T-cell (primary cell): ENCODE measurements at regions of chr2 and their contacts with region 1.

Region 1: GRCh38 chr2:218659258-218659987 is at the starts of genes BCS1L and ZNF142:
- DNase-seq: peak; percentile 82 to 96 (median 90)
- ATAC-seq: peak; percentile 97 to 99 (median 98)
- H3K4me3 ChIP-seq: peak within 1 kb of the TSS; percentile 89 to 91
- H3K4me3 Mint-ChIP-seq: peak within 1 kb of the TSS; percentile 82 to 96 (median 91)
- H3K27ac ChIP-seq: peak within 1 kb of the TSS; percentile 58
- H3K27ac Mint-ChIP-seq: peak within 1 kb of the TSS; percentile 83 to 88
- H3K4me1 ChIP-seq: peaks cover 2 to 18% of the 10 kb centered on the region in 2 experiments
- H3K4me1 Mint-ChIP-seq: peaks cover 33 to 34% (median 34%) of the 10 kb centered on the region in 3 donors
- H3K27me3 ChIP-seq: no peaks in the 10 kb centered on the region
- H3K27me3 Mint-ChIP-seq: no peaks in the 10 kb centered on the region
- total RNA-seq, gene BCS1L: 31.4 to 71.1 (median 54.2) TPM
- total RNA-seq, gene ZNF142: 38.1 to 65.0 (median 58.7) TPM

Region 2: DNA sequence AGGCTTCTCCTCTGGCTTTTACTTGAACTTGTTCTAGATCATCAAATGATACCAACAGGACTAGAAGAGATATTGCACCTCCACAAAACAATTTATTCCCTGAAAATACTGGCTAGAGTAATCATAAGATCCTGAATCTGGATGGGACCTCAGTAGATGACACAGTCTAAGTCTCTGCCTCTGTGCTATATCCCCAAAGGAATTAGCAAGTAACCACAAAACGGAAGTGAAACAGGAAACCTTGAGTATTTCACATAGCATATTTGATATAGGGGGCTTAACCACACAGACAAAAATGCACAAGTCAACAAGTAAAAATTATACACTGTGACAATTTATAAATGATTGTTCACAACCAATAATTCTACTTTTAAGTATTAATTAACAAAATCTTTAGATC is 1342.7 kb before region 1 on chr2:
- CTCF ChIA-PET with region 1: no interaction called
- POLR2A ChIA-PET with region 1: no interaction called
- DNase-seq: no peak
- ATAC-seq: no peak
- H3K4me3 ChIP-seq: no peak overlapping the region
- H3K4me3 Mint-ChIP-seq: no peak overlapping the region
- H3K27ac ChIP-seq: no peak overlapping the region
- H3K27ac Mint-ChIP-seq: no peak overlapping the region
- H3K4me1 ChIP-seq: peaks cover 0 to 8% of the 10 kb centered on the region in 2 experiments
- H3K4me1 Mint-ChIP-seq: peaks cover 14 to 18% (median 17%) of the 10 kb centered on the region in 3 donors
- H3K27me3 ChIP-seq: no peaks in the 10 kb centered on the region
- H3K27me3 Mint-ChIP-seq: no peaks in the 10 kb centered on the region

Region 3: DNA sequence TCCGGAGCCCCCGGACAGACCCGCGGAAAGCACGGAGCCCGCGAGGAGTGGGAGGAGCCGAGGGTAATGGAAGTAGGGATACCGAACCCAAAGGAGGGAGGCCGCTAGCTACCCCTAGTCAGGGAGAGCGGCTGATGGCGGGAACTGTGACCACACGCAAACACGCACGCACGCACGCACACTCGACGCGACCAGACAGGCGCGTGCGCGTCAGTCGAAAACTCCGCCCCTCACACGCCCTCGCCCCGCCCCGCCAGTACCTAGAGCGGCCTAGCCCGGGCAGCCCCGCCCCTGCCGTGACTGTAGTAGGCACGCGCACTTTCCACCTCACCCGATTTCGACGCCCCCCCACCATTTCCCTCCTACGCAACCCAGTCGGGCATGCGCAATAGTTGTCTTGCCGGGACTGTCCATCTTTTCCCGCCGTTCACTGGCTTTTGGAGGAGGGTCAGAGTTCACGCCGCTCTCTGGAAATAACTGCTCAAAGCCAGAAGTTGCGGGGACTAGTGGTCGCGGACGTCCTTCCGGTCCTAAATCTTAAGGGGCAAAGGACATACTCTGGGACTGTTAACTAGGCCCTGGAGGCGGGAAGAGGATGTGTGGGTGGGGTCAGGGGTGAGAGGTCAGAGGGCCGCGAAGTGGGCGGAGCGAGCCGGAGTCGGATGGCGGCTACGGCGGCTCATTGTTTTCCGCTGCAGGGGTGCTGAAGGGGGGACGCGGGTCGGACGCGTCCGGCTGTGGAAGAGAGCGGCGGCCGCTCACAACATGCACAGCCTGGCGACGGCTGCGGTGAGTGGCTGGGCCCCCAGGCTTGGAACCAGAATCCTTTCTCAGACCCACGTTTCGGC is 91.0 kb before region 1 on chr2 and contains the starts of genes CNOT9 and USP37:
- CTCF ChIA-PET with region 1: interaction called in 1 of 2 experiments, 11 read pairs
- POLR2A ChIA-PET with region 1: interaction called, 3 read pairs
- DNase-seq: peak; percentile 99 to 100 (median 100)
- ATAC-seq: peak; percentile 87 to 93 (median 90)
- H3K4me3 ChIP-seq: peak within 1 kb of the TSS; percentile 78 to 91
- H3K4me3 Mint-ChIP-seq: peak within 1 kb of the TSS; percentile 91 to 96 (median 96)
- H3K27ac ChIP-seq: peak within 1 kb of the TSS; percentile 98
- H3K27ac Mint-ChIP-seq: peak within 1 kb of the TSS; percentile 99 to 100
- H3K4me1 ChIP-seq: peaks cover 23 to 24% of the 10 kb centered on the region in 2 experiments
- H3K4me1 Mint-ChIP-seq: peaks cover 65 to 70% (median 67%) of the 10 kb centered on the region in 3 donors
- H3K27me3 ChIP-seq: no peaks in the 10 kb centered on the region
- H3K27me3 Mint-ChIP-seq: no peaks in the 10 kb centered on the region
- total RNA-seq, gene CNOT9: 44.1 to 64.2 (median 50.2) TPM
- total RNA-seq, gene USP37: 19.5 to 28.8 (median 22.9) TPM

Region 4: DNA sequence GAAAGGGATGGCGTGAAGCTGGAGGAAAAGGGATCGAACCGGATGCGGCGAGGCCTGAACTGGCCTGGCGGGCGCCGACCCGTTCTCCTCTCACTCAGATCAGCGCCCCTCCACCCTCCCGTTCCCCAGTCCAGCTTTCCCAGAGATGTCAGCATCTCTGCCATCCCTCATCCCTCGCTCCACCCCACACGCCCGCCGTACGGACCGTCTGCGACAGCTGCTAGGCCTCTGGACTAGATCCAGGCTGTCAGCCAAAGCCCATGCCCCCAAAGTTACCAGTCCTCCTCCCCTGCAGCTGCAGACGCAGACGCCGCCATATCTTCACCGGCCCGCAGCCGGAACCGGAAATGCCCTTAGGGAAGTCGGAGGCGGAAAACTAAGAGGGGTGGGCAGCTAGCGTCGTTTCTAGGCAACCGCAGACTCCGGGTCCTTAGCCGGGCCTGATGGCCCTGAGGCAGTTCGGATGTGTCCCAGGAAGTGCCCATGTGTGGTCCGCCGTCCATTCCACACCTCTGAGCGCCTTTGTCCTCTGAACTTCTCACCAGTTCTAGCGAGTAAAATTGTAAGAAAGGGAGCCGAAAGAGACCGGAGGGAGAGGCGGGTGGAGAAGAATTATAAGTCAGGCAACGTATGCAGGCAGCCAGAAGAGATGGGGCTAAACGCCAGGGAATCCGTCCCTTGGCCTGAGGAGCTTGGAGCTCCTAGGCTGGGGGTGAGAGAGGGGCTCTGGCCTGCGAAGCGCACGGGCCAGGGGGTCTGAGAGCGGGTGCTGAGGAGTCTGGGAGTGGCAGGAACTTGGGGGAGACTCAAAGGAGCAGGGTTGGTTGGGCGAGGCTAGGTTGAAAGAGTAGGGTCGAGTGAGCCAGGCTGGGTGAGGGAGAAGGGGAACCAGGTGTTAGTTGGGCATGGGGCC is 12.5 kb after region 1 on chr2 and contains the starts of genes RNF25 and STK36:
- CTCF ChIA-PET with region 1: interaction called, 3 to 16 read pairs
- POLR2A ChIA-PET with region 1: interaction called, 3 to 10 read pairs
- DNase-seq: peak; percentile 57 to 87 (median 77)
- ATAC-seq: peak; percentile 94 to 97 (median 96)
- H3K4me3 ChIP-seq: peak within 1 kb of the TSS; percentile 86 to 93
- H3K4me3 Mint-ChIP-seq: peak within 1 kb of the TSS; percentile 97 to 100 (median 99)
- H3K27ac ChIP-seq: peak within 1 kb of the TSS; percentile 67
- H3K27ac Mint-ChIP-seq: peak within 1 kb of the TSS; percentile 96 to 98
- H3K4me1 ChIP-seq: peaks cover 5 to 17% of the 10 kb centered on the region in 2 experiments
- H3K4me1 Mint-ChIP-seq: peaks cover 23 to 31% (median 27%) of the 10 kb centered on the region in 3 donors
- H3K27me3 ChIP-seq: no peaks in the 10 kb centered on the region
- H3K27me3 Mint-ChIP-seq: no peaks in the 10 kb centered on the region
- total RNA-seq, gene RNF25: 15.6 to 33.1 (median 29.0) TPM
- total RNA-seq, gene STK36: 19.7 to 23.6 (median 22.4) TPM

Region 5: DNA sequence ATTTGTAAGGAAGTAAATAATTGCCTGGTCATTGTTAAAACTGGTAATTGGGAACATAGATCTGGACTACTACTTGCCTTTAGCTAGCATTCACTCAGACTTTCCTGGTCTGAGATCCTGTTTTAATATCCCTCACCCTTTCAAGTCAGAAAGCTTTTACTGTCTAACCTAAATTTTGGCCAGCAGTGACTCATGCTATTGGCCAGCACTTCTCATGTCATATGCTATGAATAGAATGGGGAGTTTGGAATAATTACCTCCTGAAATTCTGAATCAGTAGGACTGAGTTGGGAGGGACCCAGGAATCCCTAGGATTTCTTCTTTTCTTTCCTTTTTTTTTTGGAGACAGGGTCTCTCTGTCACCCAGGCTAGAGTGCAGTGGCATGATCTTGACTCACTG is 31.8 kb after region 1 on chr2:
- CTCF ChIA-PET with region 1: interaction called, 4 to 10 read pairs
- POLR2A ChIA-PET with region 1: no interaction called
- DNase-seq: no peak
- ATAC-seq: no peak
- H3K4me3 ChIP-seq: no peak overlapping the region
- H3K4me3 Mint-ChIP-seq: no peak overlapping the region
- H3K27ac ChIP-seq: no peak overlapping the region
- H3K27ac Mint-ChIP-seq: no peak overlapping the region
- H3K4me1 ChIP-seq: no peaks in the 10 kb centered on the region
- H3K4me1 Mint-ChIP-seq: peaks cover 0 to 3% (median 2%) of the 10 kb centered on the region in 3 donors
- H3K27me3 ChIP-seq: no peaks in the 10 kb centered on the region
- H3K27me3 Mint-ChIP-seq: no peaks in the 10 kb centered on the region

Region 6: GRCh38 chr2:218710687-218711549 is 51.5 kb after region 1 on chr2 and contains the start of gene TTLL4:
- CTCF ChIA-PET with region 1: interaction called in 1 of 2 experiments, 11 read pairs
- POLR2A ChIA-PET with region 1: interaction called in 1 of 2 experiments, 5 read pairs
- DNase-seq: peak; percentile 95 to 99 (median 98)
- ATAC-seq: peak; percentile 97 to 100 (median 98)
- H3K4me3 ChIP-seq: peak within 1 kb of the TSS; percentile 81 to 98
- H3K4me3 Mint-ChIP-seq: peak within 1 kb of the TSS; percentile 92 to 98 (median 95)
- H3K27ac ChIP-seq: peak within 1 kb of the TSS; percentile 78
- H3K27ac Mint-ChIP-seq: peak within 1 kb of the TSS; percentile 86 to 87
- H3K4me1 ChIP-seq: peaks cover 6 to 21% of the 10 kb centered on the region in 2 experiments
- H3K4me1 Mint-ChIP-seq: peaks cover 19 to 22% (median 21%) of the 10 kb centered on the region in 3 donors
- H3K27me3 ChIP-seq: peaks cover 0 to 6% of the 10 kb centered on the region in 2 experiments
- H3K27me3 Mint-ChIP-seq: peaks cover 5 to 9% of the 10 kb centered on the region in 2 donors
- total RNA-seq, gene TTLL4: 16.9 to 29.6 (median 24.4) TPM